Activated CD8-positive, alpha-beta T cell treated with anti-CD3 and anti-CD28 coated beads, Interleukin-2, amount 10 ng/mL, durations not matched to agents 7 days and 5 days (primary cell): ENCODE measurements at regions of chr7 and their contacts with region 1.

Region 1: GRCh38 chr7:50632561-50633413 is 67.6 kb upstream of the DDC start:
- DNase-seq: peak; percentile 71
- ATAC-seq: peak; percentile 84
- H3K4me3 Mint-ChIP-seq: no peak overlapping the region
- H3K27ac Mint-ChIP-seq: no peak overlapping the region
- H3K4me1 Mint-ChIP-seq: peaks cover 6% of the 10 kb centered on the region
- H3K27me3 Mint-ChIP-seq: peaks cover 33% of the 10 kb centered on the region

Region 2: DNA sequence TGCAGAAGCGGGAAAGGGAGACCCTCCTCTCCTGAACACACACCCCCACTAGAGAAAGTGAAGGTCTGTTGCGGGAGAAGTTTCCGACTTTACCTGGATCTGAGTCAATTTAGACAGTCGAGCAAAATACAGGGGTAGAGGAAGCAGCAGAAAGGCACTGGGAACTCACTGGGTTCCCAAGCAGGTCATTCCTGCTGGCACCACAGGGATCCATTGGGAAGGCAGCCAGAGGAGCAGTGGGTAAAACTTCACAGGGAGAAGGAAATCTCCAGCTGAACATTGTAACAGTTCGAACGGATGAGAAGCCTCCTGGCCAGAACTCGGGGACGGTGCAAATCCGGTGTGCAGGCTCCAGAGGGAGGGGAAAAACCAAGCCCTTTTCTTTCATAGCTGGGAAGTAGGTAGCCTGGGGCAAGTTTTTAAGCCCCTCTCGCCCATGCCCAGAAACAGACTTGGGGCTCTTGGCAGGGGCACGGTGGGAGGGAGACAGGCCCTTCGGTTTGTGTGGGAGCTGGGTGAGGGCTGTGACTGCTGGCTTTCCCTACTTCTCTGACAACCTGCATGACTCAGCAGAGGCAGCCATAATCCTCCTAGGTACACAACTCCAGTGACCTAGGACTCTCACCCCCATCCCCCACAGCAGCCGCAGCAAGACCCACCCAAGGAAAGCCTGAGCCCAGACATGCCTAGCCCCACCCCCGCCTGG is 119.5 kb before region 1 on chr7:
- CTCF ChIA-PET with region 1: no interaction called
- POLR2A ChIA-PET with region 1: no interaction called
- DNase-seq: no peak
- ATAC-seq: no peak
- H3K4me3 Mint-ChIP-seq: no peak overlapping the region
- H3K27ac Mint-ChIP-seq: no peak overlapping the region
- H3K4me1 Mint-ChIP-seq: peaks cover 5% of the 10 kb centered on the region
- H3K27me3 Mint-ChIP-seq: peaks cover 17% of the 10 kb centered on the region

Region 3: GRCh38 chr7:50598460-50599343 is 34.1 kb before region 1 on chr7:
- CTCF ChIA-PET with region 1: interaction called, 15 read pairs
- POLR2A ChIA-PET with region 1: no interaction called
- DNase-seq: no peak
- ATAC-seq: no peak
- H3K4me3 Mint-ChIP-seq: no peak overlapping the region
- H3K27ac Mint-ChIP-seq: no peak overlapping the region
- H3K4me1 Mint-ChIP-seq: peaks cover 20% of the 10 kb centered on the region
- H3K27me3 Mint-ChIP-seq: no peaks in the 10 kb centered on the region

Region 4: GRCh38 chr7:50610521-50611277 is 22.1 kb before region 1 on chr7:
- CTCF ChIA-PET with region 1: interaction called, 84 read pairs
- POLR2A ChIA-PET with region 1: no interaction called
- DNase-seq: peak; percentile 82
- ATAC-seq: peak; percentile 82
- H3K4me3 Mint-ChIP-seq: peak overlapping the region; percentile 12
- H3K27ac Mint-ChIP-seq: peak overlapping the region; percentile 62
- H3K4me1 Mint-ChIP-seq: peaks cover 52% of the 10 kb centered on the region
- H3K27me3 Mint-ChIP-seq: peaks cover 10% of the 10 kb centered on the region

Region 5: GRCh38 chr7:50644586-50644985 is 11.8 kb after region 1 on chr7:
- CTCF ChIA-PET with region 1: interaction called, 25 read pairs
- POLR2A ChIA-PET with region 1: no interaction called
- DNase-seq: no peak
- ATAC-seq: no peak
- H3K4me3 Mint-ChIP-seq: no peak overlapping the region
- H3K27ac Mint-ChIP-seq: no peak overlapping the region
- H3K4me1 Mint-ChIP-seq: peaks cover 19% of the 10 kb centered on the region
- H3K27me3 Mint-ChIP-seq: peaks cover 2% of the 10 kb centered on the region

Region 6: DNA sequence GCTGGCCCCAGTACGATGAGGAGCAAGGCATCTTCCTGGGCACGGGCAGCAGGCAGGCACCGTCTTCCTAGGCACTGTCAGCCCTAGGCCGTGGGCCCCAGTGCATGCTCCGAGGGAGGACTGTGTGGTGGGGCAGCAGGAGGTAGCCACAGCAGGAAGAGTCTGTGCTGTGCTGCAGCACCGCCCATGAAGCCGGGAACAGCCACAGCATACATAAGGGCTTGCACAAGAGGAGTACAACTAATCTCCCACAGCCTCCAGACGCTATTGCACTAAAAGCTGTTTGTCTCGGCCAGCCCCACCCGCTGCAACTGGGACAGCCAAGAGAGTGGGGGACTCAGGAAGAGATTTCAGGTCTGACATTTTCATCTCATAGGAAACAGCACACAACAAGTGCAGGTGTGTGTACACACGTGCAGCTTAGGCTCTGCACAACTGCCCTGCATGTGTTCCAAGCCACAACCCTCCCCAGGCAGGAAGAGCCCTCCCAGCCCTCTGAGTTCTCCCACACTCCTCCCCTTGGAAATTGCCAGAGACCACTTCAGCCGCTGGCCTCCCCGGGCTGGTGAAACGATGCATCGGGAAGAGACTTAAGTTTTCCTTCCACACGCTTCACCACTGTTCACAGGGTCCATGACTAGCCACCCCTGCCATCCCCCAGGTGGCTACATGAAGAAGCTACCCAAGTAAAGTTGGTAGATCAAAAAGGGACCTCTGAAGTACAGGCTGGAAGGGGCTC is 20.5 kb after region 1 on chr7:
- CTCF ChIA-PET with region 1: interaction called, 11 read pairs
- POLR2A ChIA-PET with region 1: no interaction called
- DNase-seq: no peak
- ATAC-seq: peak; percentile 64
- H3K4me3 Mint-ChIP-seq: no peak overlapping the region
- H3K27ac Mint-ChIP-seq: no peak overlapping the region
- H3K4me1 Mint-ChIP-seq: peaks cover 29% of the 10 kb centered on the region
- H3K27me3 Mint-ChIP-seq: peaks cover 14% of the 10 kb centered on the region

Region 7: DNA sequence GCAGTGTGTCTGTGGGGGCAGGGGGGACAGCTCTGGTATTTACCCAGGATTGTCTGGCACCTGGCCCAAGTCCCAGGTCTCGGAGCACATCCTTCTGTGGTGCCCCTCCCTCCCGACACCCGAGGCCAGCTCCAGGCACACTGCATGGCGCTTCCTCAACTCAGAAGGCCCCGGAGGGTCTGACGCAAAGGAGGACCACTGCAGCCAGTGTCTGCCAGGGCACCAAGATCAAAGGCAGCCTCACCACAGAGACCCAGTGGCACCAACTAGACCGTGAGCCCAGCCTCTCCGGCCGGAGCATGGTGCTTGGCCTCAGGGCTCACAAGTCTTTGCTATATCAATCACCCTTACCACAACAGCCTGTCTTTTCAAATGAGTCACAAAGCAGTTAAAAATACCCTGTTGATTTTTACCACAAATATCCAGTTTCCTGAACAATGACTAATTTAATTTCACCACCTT is 31.7 kb after region 1 on chr7:
- CTCF ChIA-PET with region 1: interaction called, 12 read pairs
- POLR2A ChIA-PET with region 1: no interaction called
- DNase-seq: peak; percentile 32
- ATAC-seq: peak; percentile 25
- H3K4me3 Mint-ChIP-seq: peak overlapping the region; percentile 43
- H3K27ac Mint-ChIP-seq: peak overlapping the region; percentile 86
- H3K4me1 Mint-ChIP-seq: peaks cover 69% of the 10 kb centered on the region
- H3K27me3 Mint-ChIP-seq: no peaks in the 10 kb centered on the region

Region 8: GRCh38 chr7:50679218-50680007 is 46.6 kb after region 1 on chr7:
- CTCF ChIA-PET with region 1: interaction called, 20 read pairs
- POLR2A ChIA-PET with region 1: no interaction called
- DNase-seq: no peak
- ATAC-seq: peak; percentile 83
- H3K4me3 Mint-ChIP-seq: no peak overlapping the region
- H3K27ac Mint-ChIP-seq: no peak overlapping the region
- H3K4me1 Mint-ChIP-seq: peaks cover 2% of the 10 kb centered on the region
- H3K27me3 Mint-ChIP-seq: peaks cover 6% of the 10 kb centered on the region

Region 9: DNA sequence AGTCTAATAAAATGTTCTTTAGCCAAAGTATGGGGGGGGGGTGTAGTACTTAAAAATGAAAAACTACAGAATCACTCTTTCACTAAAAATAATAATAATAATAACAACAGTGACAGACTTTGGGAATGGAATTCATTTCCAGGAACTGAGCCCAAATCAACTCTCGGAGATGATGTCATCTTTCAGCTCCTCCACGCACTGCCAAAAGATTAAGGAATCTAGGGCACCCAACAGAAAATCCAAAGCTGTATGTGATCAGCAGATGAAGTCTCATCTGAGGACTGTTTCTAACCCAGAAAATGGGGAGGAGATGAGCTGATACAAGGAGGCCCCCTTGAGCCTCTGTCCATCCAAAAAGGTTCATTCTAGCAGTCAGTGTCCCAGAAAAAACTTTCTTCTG is 95.4 kb after region 1 on chr7:
- CTCF ChIA-PET with region 1: no interaction called
- POLR2A ChIA-PET with region 1: no interaction called
- DNase-seq: no peak
- ATAC-seq: no peak
- H3K4me3 Mint-ChIP-seq: no peak overlapping the region
- H3K27ac Mint-ChIP-seq: no peak overlapping the region
- H3K4me1 Mint-ChIP-seq: peaks cover 20% of the 10 kb centered on the region
- H3K27me3 Mint-ChIP-seq: no peaks in the 10 kb centered on the region